Naive thymus-derived CD4-positive, alpha-beta T cell (primary cell): ENCODE measurements at regions of chr2 and their contacts with region 1.

Region 1: DNA sequence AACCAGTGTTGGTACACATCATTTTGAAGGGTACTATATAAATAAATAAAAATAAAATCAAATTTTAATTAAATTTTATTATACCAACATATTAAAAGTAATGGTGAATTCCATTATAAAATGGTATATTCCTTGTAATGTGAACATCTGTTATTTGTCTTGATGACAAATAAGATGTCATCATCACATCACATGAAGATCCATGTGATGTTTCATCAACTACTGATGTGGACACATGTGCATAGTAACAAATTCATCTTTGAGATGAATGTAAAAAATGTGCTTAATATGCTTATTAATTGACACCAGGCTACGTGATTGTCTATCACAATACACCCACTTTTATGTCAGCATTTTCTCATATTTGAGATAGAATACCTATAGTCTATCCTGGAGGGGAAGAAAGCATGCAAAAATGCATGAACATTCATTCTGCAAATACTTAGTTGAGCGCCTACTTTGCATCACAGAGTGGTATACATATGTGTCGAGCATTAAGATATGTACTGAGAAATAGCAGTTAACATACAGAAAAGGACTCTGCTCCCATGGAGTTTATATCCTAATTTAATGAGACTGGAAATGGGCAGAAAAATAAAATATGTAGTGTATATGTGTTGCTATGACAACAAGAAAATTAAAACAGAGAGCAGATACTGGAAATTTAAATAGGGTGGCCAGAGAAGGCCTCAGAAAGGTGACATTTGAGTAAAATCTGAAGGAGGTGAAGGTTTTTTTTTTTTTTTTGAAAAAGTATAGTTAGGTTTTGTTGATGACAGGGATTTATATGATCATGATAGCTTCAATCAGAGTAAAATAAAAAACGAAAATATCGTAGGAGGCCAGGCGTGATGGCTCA is 281.1 kb downstream of the ARHGAP15 start:
- DNase-seq: no peak
- ATAC-seq: no peak
- H3K4me3 ChIP-seq: no peak overlapping the region
- H3K4me3 Mint-ChIP-seq: no peak overlapping the region
- H3K27ac ChIP-seq: no peak overlapping the region
- H3K27ac Mint-ChIP-seq: peak overlapping the region in 1 of 9 donors; percentile 77
- H3K4me1 ChIP-seq: no peaks in the 10 kb centered on the region
- H3K4me1 Mint-ChIP-seq: peaks cover 4 to 58% (median 45%) of the 10 kb centered on the region in 7 donors
- H3K27me3 ChIP-seq: no peaks in the 10 kb centered on the region
- H3K27me3 Mint-ChIP-seq: no peaks in the 10 kb centered on the region

Region 2: GRCh38 chr2:143382573-143382972 is 27.7 kb before region 1 on chr2:
- CTCF ChIA-PET with region 1: no interaction called
- POLR2A ChIA-PET with region 1: no interaction called
- intact Hi-C with region 1: no loop called
- DNase-seq: no peak
- ATAC-seq: no peak
- H3K4me3 ChIP-seq: no peak overlapping the region
- H3K4me3 Mint-ChIP-seq: no peak overlapping the region
- H3K27ac ChIP-seq: no peak overlapping the region
- H3K27ac Mint-ChIP-seq: peak overlapping the region in 2 of 9 donors; percentile 16 to 17
- H3K4me1 ChIP-seq: peaks cover 0 to 4% of the 10 kb centered on the region in 2 donors
- H3K4me1 Mint-ChIP-seq: peaks cover 14 to 55% (median 40%) of the 10 kb centered on the region in 7 donors
- H3K27me3 ChIP-seq: no peaks in the 10 kb centered on the region
- H3K27me3 Mint-ChIP-seq: no peaks in the 10 kb centered on the region

Region 3: GRCh38 chr2:143394062-143394461 is 16.2 kb before region 1 on chr2:
- CTCF ChIA-PET with region 1: no interaction called
- POLR2A ChIA-PET with region 1: no interaction called
- intact Hi-C with region 1: loop called in 1 of 2 experiments (anchors 2 kb)
- DNase-seq: no peak
- ATAC-seq: no peak
- H3K4me3 ChIP-seq: no peak overlapping the region
- H3K4me3 Mint-ChIP-seq: no peak overlapping the region
- H3K27ac ChIP-seq: no peak overlapping the region
- H3K27ac Mint-ChIP-seq: peak overlapping the region in 4 of 9 donors; percentile 10 to 36 (median 24)
- H3K4me1 ChIP-seq: no peaks in the 10 kb centered on the region
- H3K4me1 Mint-ChIP-seq: peaks cover 13 to 78% (median 54%) of the 10 kb centered on the region in 7 donors
- H3K27me3 ChIP-seq: no peaks in the 10 kb centered on the region
- H3K27me3 Mint-ChIP-seq: no peaks in the 10 kb centered on the region